ENCODE measurements at regions of chr20 and their contacts with region 1.

Region 1: DNA sequence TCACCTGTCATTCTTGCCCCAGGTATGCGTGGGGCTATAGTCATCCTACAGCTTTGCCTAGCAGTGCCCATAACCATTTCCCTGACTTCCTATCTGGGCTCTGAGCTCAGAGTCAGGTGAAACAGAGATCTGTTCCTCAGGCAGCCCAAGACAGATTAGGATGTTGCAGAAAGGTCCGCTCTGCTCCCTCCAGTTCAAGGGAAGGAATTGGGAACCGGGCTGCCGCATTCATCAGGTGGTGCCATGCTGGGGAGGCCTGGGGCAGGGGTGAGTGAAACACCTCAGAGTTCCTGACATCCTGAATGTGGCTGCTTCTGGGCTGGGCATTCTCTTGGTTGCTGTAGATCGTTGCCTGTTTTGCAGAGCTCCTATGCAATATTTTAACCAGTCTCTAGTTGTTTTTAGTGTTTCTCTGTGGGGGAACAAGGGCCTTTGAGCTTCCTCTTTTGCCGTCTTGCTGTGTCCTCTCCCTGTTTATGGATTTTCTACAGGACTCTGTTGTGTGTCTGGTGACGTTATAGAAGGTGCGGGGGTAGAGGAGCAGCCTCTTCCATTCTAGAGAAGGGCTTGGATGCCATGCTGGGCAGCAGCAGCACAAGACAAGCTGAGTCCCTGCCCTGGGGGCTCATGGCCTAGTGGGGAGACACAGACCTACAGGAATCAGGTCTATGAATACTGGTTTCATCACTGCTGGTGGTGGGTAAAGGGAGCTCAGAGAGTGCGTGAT is 9.2 kb downstream of the ENTPD6 start:
- DNase-seq: no peak
- H3K4me3 ChIP-seq: no peak overlapping the region
- H3K27ac ChIP-seq: no peak overlapping the region
- H3K4me1 ChIP-seq: no peaks in the 10 kb centered on the region
- H3K27me3 ChIP-seq: no peaks in the 10 kb centered on the region
- CTCF ChIP-seq: no peak

Region 2: DNA sequence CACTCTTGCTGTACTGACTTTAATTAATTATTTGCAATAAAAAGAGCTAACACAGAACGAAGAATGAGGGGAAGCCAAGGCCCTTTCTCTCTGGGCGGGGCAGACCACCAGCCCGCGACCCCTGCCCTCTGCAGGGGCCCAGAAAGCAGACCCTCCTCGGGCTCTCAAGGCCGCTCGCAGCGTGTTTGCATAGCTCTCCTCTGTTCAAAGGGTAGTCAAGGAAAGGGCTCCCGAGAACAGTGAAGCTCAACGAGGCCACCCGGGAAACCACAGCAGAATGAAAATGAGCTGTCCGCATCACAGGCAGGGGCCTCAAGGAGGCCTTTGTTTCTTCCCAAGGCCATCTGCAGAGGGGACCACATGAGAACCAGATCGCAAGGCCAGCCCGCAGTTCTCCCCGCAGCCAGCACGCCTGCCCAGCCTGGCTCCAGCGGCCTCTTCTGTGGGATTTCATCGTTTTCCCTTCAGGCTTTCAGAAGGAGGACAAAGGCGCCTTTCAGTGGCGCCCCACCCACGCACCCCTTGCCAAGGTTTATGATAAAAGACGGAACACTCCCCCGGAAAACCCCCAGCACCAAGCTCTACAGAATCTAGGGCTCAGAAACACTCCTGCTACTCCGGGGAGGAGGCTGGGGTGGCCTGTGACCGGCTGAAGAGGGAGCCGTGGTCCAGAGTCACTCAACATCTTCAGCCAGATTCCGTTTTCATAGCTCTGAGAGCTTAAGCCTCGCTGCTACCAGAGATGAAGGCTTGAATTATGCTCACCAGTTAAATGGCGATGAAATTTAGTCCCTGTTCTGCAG is 172.0 kb before region 1 on chr20:
- CTCF ChIA-PET with region 1: no interaction called
- POLR2A ChIA-PET with region 1: interaction called, 20 read pairs
- intact Hi-C with region 1: no loop called
- DNase-seq: no peak
- H3K4me3 ChIP-seq: no peak overlapping the region
- H3K27ac ChIP-seq: no peak overlapping the region
- H3K4me1 ChIP-seq: no peaks in the 10 kb centered on the region
- H3K27me3 ChIP-seq: no peaks in the 10 kb centered on the region
- CTCF ChIP-seq: no peak

Region 3: GRCh38 chr20:25148181-25148981 is 56.3 kb before region 1 on chr20:
- CTCF ChIA-PET with region 1: no interaction called
- POLR2A ChIA-PET with region 1: no interaction called
- intact Hi-C with region 1: no loop called
- DNase-seq: no peak
- H3K4me3 ChIP-seq: no peak overlapping the region
- H3K27ac ChIP-seq: no peak overlapping the region
- H3K4me1 ChIP-seq: no peaks in the 10 kb centered on the region
- H3K27me3 ChIP-seq: no peaks in the 10 kb centered on the region
- CTCF ChIP-seq: no peak